HCT116 (cell line): ENCODE measurements at regions of chr9 and their contacts with region 1.

Region 1: GRCh38 chr9:127825319-127826051 is 22.8 kb downstream of the FPGS start:
- DNase-seq: no peak
- ATAC-seq: peak; percentile 69
- H3K4me3 ChIP-seq: no peak overlapping the region
- H3K27ac ChIP-seq: no peak overlapping the region; the same call in 1 of the 2 replicates
- H3K4me1 ChIP-seq: peaks cover 17 to 25% of the 10 kb centered on the region in 2 experiments
- H3K27me3 ChIP-seq: no peaks in the 10 kb centered on the region
- CTCF ChIP-seq: peak; percentile 40 to 63 (median 40); a peak in 4 of 6 replicates
- POLR2A ChIP-seq: no peak
- RAD21 ChIP-seq: peak; percentile 24; the same call in 1 of the 2 replicates

Region 2: DNA sequence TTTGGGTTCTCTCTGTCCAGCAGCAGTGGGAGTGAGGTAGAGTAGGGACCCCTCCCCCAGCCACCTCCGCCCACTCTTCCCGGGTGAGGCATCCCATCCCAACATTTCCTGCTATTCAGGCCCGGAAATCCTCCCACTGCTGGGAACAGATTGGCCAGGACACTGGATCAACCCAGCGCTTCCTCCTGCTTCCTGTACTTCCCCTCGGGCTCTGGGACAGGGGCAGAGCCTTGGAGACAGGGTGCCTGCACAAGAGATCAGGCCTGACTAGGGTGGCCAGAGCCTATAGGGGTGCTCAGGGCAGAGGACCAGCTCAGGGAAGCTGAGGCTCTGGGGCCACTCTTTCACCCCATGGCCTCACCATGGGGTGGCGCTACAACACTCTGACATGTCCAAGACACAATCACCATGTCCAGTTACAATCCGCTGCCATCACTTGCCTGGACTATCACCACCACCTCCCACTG is 61.5 kb before region 1 on chr9:
- CTCF ChIA-PET with region 1: no interaction called
- POLR2A ChIA-PET with region 1: no interaction called
- RAD21 ChIA-PET with region 1: no interaction called
- intact Hi-C with region 1: loop called (anchors 1 kb)
- DNase-seq: no peak
- ATAC-seq: peak; percentile 80
- H3K4me3 ChIP-seq: no peak overlapping the region
- H3K27ac ChIP-seq: no peak overlapping the region
- H3K4me1 ChIP-seq: no peaks in the 10 kb centered on the region
- H3K27me3 ChIP-seq: no peaks in the 10 kb centered on the region; the same call in 1 of the 2 replicates
- CTCF ChIP-seq: peak; percentile 48 to 67 (median 55)
- POLR2A ChIP-seq: no peak
- RAD21 ChIP-seq: peak; percentile 68